ENCODE measurements at regions of chr1 and their contacts with region 1.

Region 1: GRCh38 chr1:228770779-228771223 is 35.5 kb downstream of the RHOU start:
- DNase-seq: no peak

Region 2: GRCh38 chr1:228810878-228811711 is 40.3 kb after region 1 on chr1:
- intact Hi-C with region 1: loop called in 1 of 2 experiments (anchors 1 kb)
- DNase-seq: no peak

Region 3: DNA sequence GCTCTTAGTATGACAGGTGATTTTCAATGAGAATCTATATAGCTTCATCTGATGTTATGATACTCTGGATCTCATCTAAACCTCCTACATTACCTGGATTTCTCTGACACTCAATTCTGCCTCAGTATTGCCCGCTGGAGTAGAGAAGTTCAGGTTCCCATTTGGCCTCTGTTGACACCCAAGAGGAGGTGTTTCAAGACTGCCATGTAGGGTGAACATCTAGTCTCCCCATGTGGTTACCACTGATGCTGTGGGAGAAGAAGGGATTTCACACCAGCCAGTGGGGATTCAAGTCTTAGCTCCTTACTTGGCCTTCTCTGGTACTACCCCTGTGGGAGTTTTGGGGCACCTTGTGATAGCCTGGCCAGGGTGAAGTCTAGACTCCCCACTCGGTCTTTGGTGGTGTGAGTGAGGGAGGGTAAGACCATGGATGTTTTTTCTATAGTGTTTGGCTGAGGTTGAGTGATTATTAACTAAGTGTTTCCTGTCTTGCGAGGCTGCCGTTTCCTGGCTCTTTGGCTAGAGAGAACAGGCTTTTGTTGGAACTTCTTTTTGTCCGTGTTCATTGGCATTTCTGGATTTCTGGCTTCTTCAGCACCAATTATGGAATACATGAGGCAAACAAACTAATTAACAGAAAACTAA is 55.2 kb after region 1 on chr1:
- intact Hi-C with region 1: no loop called
- DNase-seq: no peak

Region 4: GRCh38 chr1:228913626-228914414 is 143.0 kb after region 1 on chr1:
- intact Hi-C with region 1: no loop called
- DNase-seq: no peak